ENCODE measurements at regions of chr3 and their contacts with region 1.

Region 1: DNA sequence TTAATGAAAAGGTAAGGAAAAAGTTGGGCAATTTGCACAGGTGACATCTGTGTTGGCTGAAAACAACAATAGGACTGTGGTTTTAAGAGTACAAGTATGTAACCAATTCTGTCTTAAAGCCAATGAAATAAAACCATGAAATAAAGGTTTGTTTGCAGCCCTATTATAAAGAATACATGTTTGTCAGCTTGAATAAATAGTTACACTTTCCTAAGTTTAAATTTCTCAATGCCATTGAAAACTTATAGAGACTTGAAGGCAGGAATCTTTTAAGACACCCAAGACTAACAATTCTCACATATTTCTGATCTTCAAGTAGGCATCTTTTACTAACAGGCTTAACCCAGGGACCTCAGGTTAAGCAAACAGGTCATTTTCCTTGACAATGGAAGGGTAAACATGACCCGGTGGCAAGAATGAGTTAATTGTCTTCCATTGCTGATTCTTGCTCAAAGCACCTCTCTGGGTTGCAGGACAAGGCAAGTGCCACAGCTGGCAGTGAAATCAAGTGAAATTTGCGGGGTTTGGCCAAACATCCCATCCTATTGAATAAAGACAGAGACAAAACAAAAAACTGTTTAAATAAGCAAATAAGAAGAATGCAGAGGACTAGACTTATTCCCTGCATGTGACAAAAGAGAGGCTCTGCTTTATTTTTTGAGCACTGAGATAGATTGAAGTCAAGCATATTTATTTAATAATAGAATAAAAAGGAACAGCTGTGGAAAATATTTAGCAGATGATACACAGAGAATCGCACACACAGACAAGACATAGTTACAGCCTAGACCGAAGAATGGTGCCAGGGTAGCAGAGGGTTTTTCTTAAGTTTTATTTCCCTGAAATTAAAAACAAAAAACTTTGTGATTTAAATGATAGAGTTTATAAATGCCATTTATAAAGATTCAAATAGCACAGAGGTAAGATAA is 56.1 kb upstream of the MITF start:
- DNase-seq: no peak
- ATAC-seq: no peak
- H3K4me3 ChIP-seq: no peak overlapping the region
- H3K27ac ChIP-seq: no peak overlapping the region
- H3K4me1 ChIP-seq: peaks cover 0 to 5% (median 0%) of the 10 kb centered on the region in 9 donors
- H3K27me3 ChIP-seq: no peaks in the 10 kb centered on the region
- CTCF ChIP-seq: no peak

Region 2: DNA sequence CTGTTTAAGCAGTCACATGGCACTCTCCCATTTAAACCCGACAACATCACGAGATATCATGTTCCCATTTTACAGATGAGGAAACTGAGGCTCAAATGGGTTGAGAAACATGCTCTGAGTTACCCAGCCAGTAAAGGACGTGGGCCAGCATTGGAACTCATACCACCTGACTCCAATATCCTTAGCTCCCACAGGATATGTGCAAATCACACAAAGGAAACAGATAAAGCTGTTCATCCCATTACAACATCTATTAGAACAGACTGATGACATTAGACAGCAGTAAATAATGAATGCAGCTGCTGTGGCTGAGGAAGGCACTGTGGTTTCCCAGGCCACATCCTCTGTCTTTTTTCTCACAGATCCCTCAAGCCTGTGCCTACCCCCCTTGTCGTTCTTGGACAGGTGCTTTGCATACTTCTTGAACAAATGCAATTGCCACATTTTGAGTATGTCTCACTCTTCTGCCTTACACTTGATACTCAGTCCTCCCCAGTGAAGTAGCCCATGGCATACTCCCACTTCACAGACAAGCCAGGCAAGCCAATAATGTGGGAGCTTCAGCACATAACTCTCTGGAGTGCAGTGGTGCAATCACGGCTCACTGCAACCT is 314.9 kb before region 1 on chr3:
- intact Hi-C with region 1: no loop called
- DNase-seq: no peak
- ATAC-seq: peak in 5 of 8 donors; percentile 33 to 62 (median 35)
- H3K4me3 ChIP-seq: no peak overlapping the region
- H3K27ac ChIP-seq: peak overlapping the region in 4 of 10 donors; percentile 49 to 89 (median 79)
- H3K4me1 ChIP-seq: peaks cover 0 to 55% (median 28%) of the 10 kb centered on the region in 9 donors
- H3K27me3 ChIP-seq: no peaks in the 10 kb centered on the region
- CTCF ChIP-seq: no peak

Region 3: GRCh38 chr3:69819282-69819681 is 136.1 kb after region 1 on chr3:
- intact Hi-C with region 1: no loop called
- DNase-seq: peak in 1 of 2 donors; percentile 50
- ATAC-seq: peak in 7 of 8 donors; percentile 49 to 85 (median 76)
- H3K4me3 ChIP-seq: no peak overlapping the region
- H3K27ac ChIP-seq: peak overlapping the region in 6 of 10 donors; percentile 7 to 63 (median 42)
- H3K4me1 ChIP-seq: peaks cover 10 to 73% (median 55%) of the 10 kb centered on the region in 9 donors
- H3K27me3 ChIP-seq: no peaks in the 10 kb centered on the region
- CTCF ChIP-seq: no peak

Region 4: DNA sequence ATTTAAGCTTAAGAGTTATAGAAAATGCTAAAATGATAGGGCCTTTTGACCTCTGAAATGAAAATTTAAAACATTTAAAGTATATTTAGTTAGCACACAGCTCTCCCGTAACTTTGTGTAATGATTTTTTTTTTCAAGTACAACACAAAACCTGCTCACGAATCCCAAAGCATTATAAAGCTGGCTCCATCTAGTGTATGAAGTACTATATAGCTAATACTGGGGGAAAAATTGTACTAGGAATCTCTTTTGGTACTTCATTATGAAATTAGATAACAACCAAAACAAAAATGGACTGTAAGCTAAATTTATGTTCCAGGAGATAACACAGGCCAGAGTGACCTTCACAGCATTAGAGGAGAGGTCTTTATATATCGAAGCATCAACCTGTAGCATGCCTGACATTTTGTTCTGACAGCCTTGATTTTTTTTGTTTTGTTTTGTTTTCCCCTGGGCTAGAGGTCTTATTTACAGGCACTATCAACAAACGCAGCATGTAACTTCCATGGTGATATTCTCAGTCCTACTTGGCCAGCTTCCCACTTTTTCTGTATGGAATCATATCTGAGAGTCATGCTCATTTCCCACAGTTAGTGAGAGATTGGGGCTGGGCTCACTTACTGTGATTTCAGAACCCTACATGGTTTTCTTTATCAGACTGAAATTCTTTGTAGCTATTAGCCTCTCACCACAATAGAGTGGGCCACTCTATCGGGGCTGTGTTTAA is 172.5 kb after region 1 on chr3:
- intact Hi-C with region 1: loop called in 1 of 10 experiments (anchors 10 kb)
- DNase-seq: no peak
- ATAC-seq: peak in 7 of 8 donors; percentile 44 to 78 (median 54)
- H3K4me3 ChIP-seq: no peak overlapping the region
- H3K27ac ChIP-seq: peak overlapping the region in 6 of 10 donors; percentile 2 to 61 (median 53)
- H3K4me1 ChIP-seq: peaks cover 0 to 56% (median 28%) of the 10 kb centered on the region in 9 donors
- H3K27me3 ChIP-seq: no peaks in the 10 kb centered on the region
- CTCF ChIP-seq: peak in 7 of 9 donors; percentile 43 to 71 (median 56)